ENCODE measurements at regions of chr12 and their contacts with region 1.

Region 1: GRCh38 chr12:120356567-120357030 is 12.4 kb downstream of the MSI1 start:
- DNase-seq: peak; percentile 90 to 98
- ATAC-seq: peak; percentile 91 to 95
- H3K4me3 ChIP-seq: peak overlapping the region; percentile 32
- H3K27ac ChIP-seq: peak overlapping the region; percentile 23 to 70; a peak in 4 of 6 replicates
- H3K4me1 ChIP-seq: peaks cover 8% of the 10 kb centered on the region
- CTCF ChIP-seq: peak; percentile 95
- EP300 ChIP-seq: no peak
- POLR2A ChIP-seq: no peak
- RAD21 ChIP-seq: peak; percentile 92 to 97

Region 2: DNA sequence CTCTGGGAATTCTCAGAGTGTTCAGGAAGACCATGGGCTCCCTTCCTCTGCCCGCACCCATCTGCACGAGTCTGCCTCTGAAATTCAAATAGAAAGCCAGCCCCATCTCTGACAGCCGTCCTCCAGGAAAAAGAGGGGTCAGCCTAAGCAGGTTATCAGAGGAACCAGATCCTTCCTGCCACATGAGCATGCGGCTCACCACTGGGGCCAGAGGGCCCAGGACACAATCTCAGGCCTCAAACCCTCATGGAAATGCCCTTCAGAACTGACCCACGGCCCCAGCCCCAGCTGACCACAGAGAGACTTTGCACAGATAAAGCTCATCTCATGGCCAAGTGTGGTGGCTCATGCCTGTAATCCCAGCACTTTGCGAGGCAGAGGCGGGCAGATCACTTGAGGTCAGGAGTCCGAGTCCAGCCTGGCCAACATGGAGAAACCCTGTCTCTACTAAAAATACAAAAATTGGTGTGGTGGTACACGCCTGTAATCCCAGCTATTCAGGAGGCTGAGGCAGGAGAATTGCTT is 114.3 kb before region 1 on chr12:
- CTCF ChIA-PET with region 1: no interaction called
- POLR2A ChIA-PET with region 1: no interaction called
- DNase-seq: no peak
- ATAC-seq: no peak
- H3K4me3 ChIP-seq: no peak overlapping the region
- H3K27ac ChIP-seq: peak overlapping the region in 1 of 2 experiments; percentile 9; a peak in 2 of 6 replicates
- H3K4me1 ChIP-seq: peaks cover 79% of the 10 kb centered on the region
- CTCF ChIP-seq: no peak
- EP300 ChIP-seq: no peak
- POLR2A ChIP-seq: no peak
- RAD21 ChIP-seq: no peak

Region 3: DNA sequence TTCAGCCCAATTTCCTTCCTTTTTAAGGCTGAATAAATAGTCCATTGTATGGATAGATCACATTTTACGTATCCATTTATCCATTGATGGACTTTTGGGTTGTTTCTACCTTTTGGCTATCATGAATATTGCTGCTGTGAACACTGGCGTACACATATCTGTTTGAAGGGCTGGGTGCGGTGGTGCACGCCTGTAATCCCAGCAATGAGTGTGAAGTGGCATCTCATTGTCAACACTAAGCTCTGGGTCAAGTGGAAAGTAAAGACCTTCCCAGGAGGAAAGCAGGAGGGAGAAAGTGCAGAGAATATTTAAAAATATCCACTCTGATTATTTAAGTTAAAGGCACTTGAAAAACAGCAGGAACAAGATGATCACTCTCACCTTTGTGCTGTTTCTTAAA is 17.3 kb before region 1 on chr12:
- CTCF ChIA-PET with region 1: interaction called, 11 read pairs
- POLR2A ChIA-PET with region 1: no interaction called
- DNase-seq: no peak
- ATAC-seq: no peak
- H3K4me3 ChIP-seq: no peak overlapping the region
- H3K27ac ChIP-seq: no peak overlapping the region
- H3K4me1 ChIP-seq: no peaks in the 10 kb centered on the region
- CTCF ChIP-seq: no peak
- EP300 ChIP-seq: no peak
- POLR2A ChIP-seq: no peak
- RAD21 ChIP-seq: no peak

Region 4: DNA sequence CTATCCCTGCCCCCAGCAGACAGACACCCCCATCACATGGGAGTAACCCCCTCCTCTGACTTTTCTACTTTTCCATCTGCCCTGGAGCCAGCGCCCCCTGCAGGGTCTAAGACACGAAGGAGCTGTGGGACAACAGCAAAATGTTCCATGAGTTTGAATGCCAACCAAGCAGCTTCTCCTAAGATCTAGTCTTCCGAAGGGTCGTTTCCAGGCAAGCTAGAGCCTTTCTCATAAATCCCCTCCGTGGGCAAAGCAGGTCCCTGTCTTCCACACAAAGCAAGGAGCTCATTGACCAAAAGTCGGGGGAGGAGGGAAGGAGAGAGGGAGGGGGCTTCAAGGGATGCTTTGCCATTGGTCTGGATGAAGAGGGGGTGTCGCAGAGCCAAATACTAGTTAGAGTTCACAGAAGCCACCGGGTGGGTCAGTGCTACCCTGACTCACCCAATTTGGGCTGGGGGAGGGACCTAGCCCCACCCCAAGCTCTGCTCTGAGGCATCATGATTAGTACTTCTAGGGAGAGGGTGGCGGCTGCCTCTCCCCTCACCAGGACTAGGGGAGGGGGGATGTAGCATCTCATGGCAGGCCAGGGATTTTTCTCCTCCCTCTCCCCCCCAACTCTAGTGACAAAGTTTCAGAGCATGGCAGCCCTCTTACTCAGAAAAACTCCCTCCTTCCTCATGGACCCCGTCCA is 10.8 kb after region 1 on chr12:
- CTCF ChIA-PET with region 1: interaction called, 22 read pairs
- POLR2A ChIA-PET with region 1: no interaction called
- DNase-seq: peak in 1 of 2 experiments; percentile 52
- ATAC-seq: peak in 1 of 2 experiments; percentile 47; a peak in 3 of 6 replicates
- H3K4me3 ChIP-seq: no peak overlapping the region
- H3K27ac ChIP-seq: no peak overlapping the region
- H3K4me1 ChIP-seq: peaks cover 14% of the 10 kb centered on the region; the same call in 2 of the 3 replicates
- CTCF ChIP-seq: peak; percentile 39; the same call in 2 of the 3 replicates
- EP300 ChIP-seq: no peak
- POLR2A ChIP-seq: no peak
- RAD21 ChIP-seq: no peak

Region 5: DNA sequence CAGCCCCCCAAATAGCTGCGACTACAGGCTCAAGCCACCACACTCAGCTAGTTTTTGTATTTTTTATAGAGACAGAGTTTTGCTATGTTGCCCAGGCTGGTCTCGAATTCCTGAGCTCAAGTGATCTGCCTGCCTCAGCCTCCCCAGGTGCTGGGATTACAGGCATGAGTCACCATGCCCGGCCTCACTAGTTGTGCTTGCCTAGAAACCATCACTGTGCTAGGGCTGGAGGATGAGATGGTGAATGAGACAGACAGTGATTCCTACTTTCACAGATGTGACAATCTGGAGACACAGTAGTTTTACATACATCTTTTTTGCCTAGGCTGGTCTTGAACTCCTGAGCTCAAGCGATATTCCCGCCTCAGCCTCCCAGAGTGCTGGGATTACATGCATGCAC is 19.8 kb after region 1 on chr12:
- CTCF ChIA-PET with region 1: interaction called, 13 read pairs
- POLR2A ChIA-PET with region 1: no interaction called
- DNase-seq: no peak
- ATAC-seq: peak in 1 of 2 experiments; percentile 35; a peak in 3 of 6 replicates
- H3K4me3 ChIP-seq: no peak overlapping the region
- H3K27ac ChIP-seq: no peak overlapping the region
- H3K4me1 ChIP-seq: peaks cover 4% of the 10 kb centered on the region; the same call in 1 of the 3 replicates
- CTCF ChIP-seq: no peak
- EP300 ChIP-seq: no peak
- POLR2A ChIP-seq: no peak
- RAD21 ChIP-seq: no peak

Region 6: DNA sequence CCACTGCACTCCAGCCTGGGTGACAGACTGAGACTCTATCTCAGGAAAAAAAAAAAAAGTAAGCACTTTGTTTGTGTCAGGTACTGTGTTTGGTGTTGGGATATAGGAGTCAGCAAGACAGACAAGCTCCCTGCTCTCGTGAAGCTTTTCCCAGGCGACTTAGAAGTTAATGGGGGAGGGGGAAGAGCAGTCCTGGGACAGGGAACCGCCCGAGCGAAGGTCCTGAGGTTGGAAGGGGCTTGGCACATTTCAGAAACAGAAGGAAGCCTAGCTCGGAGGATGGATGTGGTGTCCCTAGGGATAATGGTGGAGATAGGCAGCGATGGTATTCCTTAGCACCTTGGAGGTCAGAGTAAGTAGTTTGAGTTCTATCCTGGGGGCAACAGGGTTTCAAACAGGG is 72.8 kb after region 1 on chr12:
- CTCF ChIA-PET with region 1: interaction called, 75 read pairs
- POLR2A ChIA-PET with region 1: no interaction called
- DNase-seq: no peak
- ATAC-seq: no peak
- H3K4me3 ChIP-seq: no peak overlapping the region
- H3K27ac ChIP-seq: no peak overlapping the region
- H3K4me1 ChIP-seq: no peaks in the 10 kb centered on the region
- CTCF ChIP-seq: no peak
- EP300 ChIP-seq: no peak
- POLR2A ChIP-seq: no peak
- RAD21 ChIP-seq: no peak

Region 7: GRCh38 chr12:120437754-120438494 is 81.3 kb after region 1 on chr12 and contains the start of gene COX6A1:
- CTCF ChIA-PET with region 1: interaction called, 75 read pairs
- POLR2A ChIA-PET with region 1: no interaction called
- DNase-seq: peak; percentile 99
- ATAC-seq: peak; percentile 97 to 98
- H3K4me3 ChIP-seq: peak within 1 kb of the TSS; percentile 79
- H3K27ac ChIP-seq: peak within 1 kb of the TSS; percentile 71 to 91
- H3K4me1 ChIP-seq: peaks cover 14% of the 10 kb centered on the region
- CTCF ChIP-seq: no peak
- EP300 ChIP-seq: no peak
- POLR2A ChIP-seq: peak; percentile 77
- RAD21 ChIP-seq: no peak
- polyA plus RNA-seq, gene COX6A1: 948 and 1,287 TPM in 2 replicates

Measured in A549 (cell line).